Heart right ventricle (tissue), 16 donors: ENCODE measurements at regions of chr9 and their contacts with region 1.

Region 1: GRCh38 chr9:131111854-131112311 is 13.5 kb upstream of the NUP214 start:
- DNase-seq: no peak
- ATAC-seq: no peak
- H3K4me3 ChIP-seq: no peak overlapping the region
- H3K27ac ChIP-seq: peak overlapping the region in 3 of 10 donors; percentile 23 to 36 (median 28)
- H3K4me1 ChIP-seq: peaks cover 0 to 52% (median 14%) of the 10 kb centered on the region in 9 donors
- H3K27me3 ChIP-seq: no peaks in the 10 kb centered on the region
- CTCF ChIP-seq: no peak

Region 2: DNA sequence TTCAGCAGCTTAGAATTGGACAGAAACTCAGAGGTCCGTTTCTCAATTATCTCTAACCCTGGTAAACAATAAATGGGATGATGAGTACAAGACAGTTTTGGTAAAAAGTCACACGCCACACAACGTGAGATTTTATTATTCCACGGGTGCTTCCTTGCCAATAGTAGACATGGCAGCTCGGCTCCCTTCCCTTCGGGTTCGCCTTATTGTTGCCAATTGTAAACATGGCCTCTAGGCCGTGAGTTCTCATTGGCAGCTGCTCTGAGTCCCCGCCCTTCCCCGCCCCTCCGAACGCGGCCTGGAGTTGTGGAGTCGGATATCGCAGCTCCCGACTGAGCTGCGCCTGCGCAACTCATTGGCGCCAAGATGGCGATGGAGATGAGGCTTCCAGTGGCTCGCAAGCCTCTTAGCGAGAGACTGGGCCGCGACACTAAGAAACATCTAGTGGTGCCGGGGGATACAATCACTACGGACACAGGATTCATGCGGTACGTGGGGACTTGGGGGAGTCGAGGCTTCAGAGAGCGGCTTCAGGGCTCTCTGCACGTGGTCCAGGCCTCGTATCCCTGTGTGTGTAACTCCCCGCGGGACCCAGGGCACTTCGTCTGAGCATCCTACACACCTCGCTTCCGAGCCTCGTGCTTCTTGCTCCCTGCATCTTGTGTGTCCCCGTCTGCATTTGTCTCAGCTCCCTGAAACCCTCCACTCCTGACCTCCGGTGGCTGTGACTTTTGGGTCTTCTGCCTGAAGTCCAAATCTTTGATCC is 418.3 kb before region 1 on chr9 and contains the start of gene EXOSC2:
- intact Hi-C with region 1: loop called in 1 of 10 experiments (anchors 10 kb)
- DNase-seq: peak; percentile 98 to 99
- ATAC-seq: peak; percentile 94 to 99 (median 98)
- H3K4me3 ChIP-seq: peak within 1 kb of the TSS; percentile 24 to 84 (median 75)
- H3K27ac ChIP-seq: peak within 1 kb of the TSS in 9 of 10 donors; percentile 9 to 74 (median 63)
- H3K4me1 ChIP-seq: peaks cover 0 to 30% (median 21%) of the 10 kb centered on the region in 9 donors
- H3K27me3 ChIP-seq: no peaks in the 10 kb centered on the region
- CTCF ChIP-seq: no peak
- total RNA-seq, gene EXOSC2: 11.9 to 17.7 (median 13.1) TPM

Region 3: DNA sequence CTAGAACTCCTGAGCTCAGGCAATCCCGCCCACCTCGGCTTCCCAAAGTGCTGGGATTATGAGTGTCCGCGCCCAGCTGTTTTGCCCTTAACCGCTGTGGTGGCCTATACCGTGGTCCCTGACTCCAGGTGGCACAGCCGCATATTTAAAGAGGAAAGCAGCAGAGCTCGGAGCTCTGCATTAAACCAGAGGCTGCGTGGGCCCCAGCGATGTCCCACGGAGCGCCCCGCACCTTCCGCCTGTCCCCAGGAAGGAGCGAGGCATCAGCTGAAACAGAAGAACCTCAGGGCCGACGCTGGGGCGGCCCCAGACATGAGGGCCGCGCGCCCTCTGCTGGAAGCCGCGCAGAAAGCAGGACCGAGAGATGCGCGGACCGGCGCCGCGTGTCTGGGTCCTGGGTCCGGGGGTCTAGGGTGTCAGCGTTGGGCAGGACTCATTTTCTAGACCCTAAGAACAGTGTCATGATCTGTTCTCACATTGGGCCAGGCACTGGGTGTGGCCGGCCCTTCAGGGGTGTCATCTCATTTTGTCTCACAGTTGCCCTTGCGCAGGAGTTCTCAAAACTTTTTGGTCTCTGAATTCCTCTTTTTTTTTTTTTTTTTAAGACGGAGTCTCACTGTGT is 65.2 kb before region 1 on chr9:
- intact Hi-C with region 1: no loop called
- DNase-seq: peak; percentile 39 to 69
- ATAC-seq: peak; percentile 80 to 90 (median 84)
- H3K4me3 ChIP-seq: no peak overlapping the region
- H3K27ac ChIP-seq: no peak overlapping the region
- H3K4me1 ChIP-seq: peaks cover 0 to 7% (median 0%) of the 10 kb centered on the region in 9 donors
- H3K27me3 ChIP-seq: peaks cover 0 to 6% (median 0%) of the 10 kb centered on the region in 7 donors
- CTCF ChIP-seq: peak; percentile 77 to 97 (median 94)

Region 4: GRCh38 chr9:131082774-131083512 is 28.9 kb before region 1 on chr9:
- intact Hi-C with region 1: loop called in 1 of 10 experiments (anchors 2 kb)
- DNase-seq: no peak
- ATAC-seq: peak in 6 of 8 donors; percentile 33 to 85 (median 64)
- H3K4me3 ChIP-seq: no peak overlapping the region
- H3K27ac ChIP-seq: peak overlapping the region in 1 of 10 donors; percentile 70
- H3K4me1 ChIP-seq: peaks cover 0 to 7% (median 0%) of the 10 kb centered on the region in 9 donors
- H3K27me3 ChIP-seq: no peaks in the 10 kb centered on the region
- CTCF ChIP-seq: peak in 1 of 9 donors; percentile 7